ENCODE measurements at regions of chr6 and their contacts with region 1.

Region 1: DNA sequence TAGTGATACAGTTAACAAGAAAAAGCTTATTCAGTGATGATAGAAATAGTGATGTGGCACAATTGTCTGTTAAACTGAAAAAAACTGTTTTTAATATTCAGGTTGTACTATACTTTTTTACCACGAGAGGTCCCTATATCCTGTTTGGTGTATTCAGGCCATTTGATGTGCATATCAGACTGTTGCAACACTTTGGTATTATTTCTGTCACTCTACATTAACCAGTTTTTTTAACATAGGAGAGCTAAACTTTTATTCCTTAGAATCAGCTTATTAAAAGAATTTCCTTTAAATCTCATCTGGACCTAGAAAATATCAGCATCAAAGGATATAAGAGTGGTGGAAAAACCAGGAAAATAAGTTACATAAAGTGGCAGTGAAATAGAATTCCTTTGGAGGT is 36.8 kb downstream of the TSPYL4 start:
- DNase-seq: peak; percentile 29
- H3K4me3 ChIP-seq: no peak overlapping the region
- H3K27ac ChIP-seq: no peak overlapping the region
- H3K4me1 ChIP-seq: no peaks in the 10 kb centered on the region
- H3K27me3 ChIP-seq: no peaks in the 10 kb centered on the region
- CTCF ChIP-seq: peak; percentile 49 to 57

Region 2: GRCh38 chr6:116010790-116011401 is 206.2 kb before region 1 on chr6:
- CTCF ChIA-PET with region 1: no interaction called
- dilution Hi-C with region 1: no loop called
- in situ Hi-C with region 1: no loop called
- intact Hi-C with region 1: loop called (anchors 10 kb)
- DNase-seq: peak; percentile 58
- H3K4me3 ChIP-seq: no peak overlapping the region
- H3K27ac ChIP-seq: peak overlapping the region; percentile 73
- H3K4me1 ChIP-seq: peaks cover 47% of the 10 kb centered on the region
- H3K27me3 ChIP-seq: no peaks in the 10 kb centered on the region
- CTCF ChIP-seq: peak; percentile 76 to 91

Region 3: GRCh38 chr6:116268589-116269293 is 51.7 kb after region 1 on chr6:
- CTCF ChIA-PET with region 1: interaction called, 5 read pairs
- dilution Hi-C with region 1: no loop called
- in situ Hi-C with region 1: no loop called
- intact Hi-C with region 1: loop called (anchors 1 kb)
- DNase-seq: peak; percentile 68
- H3K4me3 ChIP-seq: no peak overlapping the region
- H3K27ac ChIP-seq: no peak overlapping the region
- H3K4me1 ChIP-seq: peaks cover 33% of the 10 kb centered on the region
- H3K27me3 ChIP-seq: no peaks in the 10 kb centered on the region
- CTCF ChIP-seq: peak; percentile 93 to 98

Region 4: DNA sequence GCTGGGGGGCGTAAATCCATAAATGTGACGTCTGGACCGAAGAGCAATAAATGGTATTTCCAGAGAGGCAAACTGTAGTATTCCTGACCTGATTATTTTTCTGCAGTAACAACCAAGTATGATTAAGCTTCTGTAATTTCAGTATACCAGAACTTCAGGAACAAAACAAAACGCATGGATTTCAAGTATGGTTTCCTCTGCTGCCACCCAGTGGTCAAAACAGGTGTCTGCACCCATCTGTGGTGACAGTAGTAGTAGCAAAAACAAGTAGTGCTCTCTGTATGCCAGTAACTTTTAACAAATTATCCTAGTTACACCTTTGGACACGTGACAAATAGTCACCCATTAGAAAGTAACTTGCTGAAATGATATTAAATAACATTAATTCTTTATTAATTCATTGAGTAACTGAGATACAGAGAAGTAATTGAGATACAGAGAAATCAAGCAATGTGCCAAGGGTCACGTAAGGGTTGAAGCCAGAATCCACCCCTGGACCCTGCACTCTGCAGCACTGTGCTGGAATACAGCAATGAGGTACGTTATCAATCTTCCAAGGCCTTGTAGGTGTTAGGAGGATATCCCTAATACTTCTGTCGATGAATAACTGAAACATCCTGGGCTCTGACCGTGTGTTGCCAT is 344.4 kb after region 1 on chr6:
- CTCF ChIA-PET with region 1: no interaction called
- dilution Hi-C with region 1: no loop called
- in situ Hi-C with region 1: no loop called
- intact Hi-C with region 1: loop called (anchors 2 kb)
- DNase-seq: peak; percentile 58
- H3K4me3 ChIP-seq: no peak overlapping the region
- H3K27ac ChIP-seq: no peak overlapping the region
- H3K4me1 ChIP-seq: peaks cover 29% of the 10 kb centered on the region
- H3K27me3 ChIP-seq: no peaks in the 10 kb centered on the region
- CTCF ChIP-seq: peak; percentile 84 to 96

Region 5: GRCh38 chr6:116847227-116847626 is 630.2 kb after region 1 on chr6:
- CTCF ChIA-PET with region 1: no interaction called
- dilution Hi-C with region 1: no loop called
- in situ Hi-C with region 1: no loop called
- intact Hi-C with region 1: loop called (anchors 10 kb)
- DNase-seq: peak; percentile 24
- H3K4me3 ChIP-seq: no peak overlapping the region
- H3K27ac ChIP-seq: no peak overlapping the region
- H3K4me1 ChIP-seq: no peaks in the 10 kb centered on the region
- H3K27me3 ChIP-seq: peaks cover 2% of the 10 kb centered on the region
- CTCF ChIP-seq: peak; percentile 6 to 31

Measured in mammary epithelial cell (primary cell).